Activated T-helper 2 cell treated with anti-CD3 and anti-CD28 coated beads, Interferon-gamma antibody, Interleukin-2, Interleukin-4, amounts not matched to agents 10 μg/mL and 5 μg/mL and 100 μg/mL, durations not matched to agents 14 hours and 24 hours and 36 hours (primary cell): ENCODE measurements at regions of chr1 and their contacts with region 1.

Region 1: GRCh38 chr1:107590900-107591633 is 373.9 kb downstream of the VAV3 start:
- DNase-seq: no peak
- H3K4me3 Mint-ChIP-seq: no peak overlapping the region
- H3K27ac Mint-ChIP-seq: no peak overlapping the region
- H3K4me1 Mint-ChIP-seq: peaks cover 12% of the 10 kb centered on the region
- H3K27me3 Mint-ChIP-seq: no peaks in the 10 kb centered on the region

Region 2: DNA sequence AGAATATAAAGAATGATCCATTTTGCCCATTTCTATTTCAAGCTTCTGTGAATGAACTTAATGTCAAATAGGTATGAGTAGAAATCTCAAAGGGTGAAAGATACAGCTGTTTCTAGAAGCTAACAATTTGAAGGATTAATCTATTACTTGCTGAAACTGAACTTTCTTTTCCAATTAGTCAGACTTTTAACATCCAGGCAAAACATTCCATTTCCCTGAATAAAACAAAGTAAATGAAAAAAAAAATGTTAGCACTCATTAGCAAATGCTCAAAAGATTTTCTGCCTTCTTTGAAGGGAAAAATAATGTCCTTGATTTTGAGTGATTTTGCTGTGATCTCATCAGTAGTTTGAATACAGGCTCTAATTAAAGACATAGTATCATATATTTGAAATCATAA is 982.2 kb before region 1 on chr1:
- intact Hi-C with region 1: no loop called
- DNase-seq: no peak
- H3K4me3 Mint-ChIP-seq: no peak overlapping the region
- H3K27ac Mint-ChIP-seq: no peak overlapping the region
- H3K4me1 Mint-ChIP-seq: no peaks in the 10 kb centered on the region
- H3K27me3 Mint-ChIP-seq: no peaks in the 10 kb centered on the region

Region 3: GRCh38 chr1:107622966-107623365 is 31.9 kb after region 1 on chr1:
- intact Hi-C with region 1: loop called (anchors 2 kb)
- DNase-seq: no peak
- H3K4me3 Mint-ChIP-seq: no peak overlapping the region
- H3K27ac Mint-ChIP-seq: no peak overlapping the region
- H3K4me1 Mint-ChIP-seq: peaks cover 8% of the 10 kb centered on the region
- H3K27me3 Mint-ChIP-seq: peaks cover 17% of the 10 kb centered on the region